Activated CD4-positive, alpha-beta T cell treated with anti-CD3 and anti-CD28 coated beads, Interleukin-2, amount 10 ng/mL, durations not matched to agents 24 days and 14 days (primary cell): ENCODE measurements at regions of chr2 and their contacts with region 1.

Region 1: GRCh38 chr2:200811336-200812121 is at the start of gene BZW1:
- DNase-seq: peak; percentile 99
- H3K4me3 Mint-ChIP-seq: peak within 1 kb of the TSS; percentile 100
- H3K27ac Mint-ChIP-seq: peak within 1 kb of the TSS; percentile 99
- H3K4me1 Mint-ChIP-seq: peaks cover 43% of the 10 kb centered on the region
- H3K27me3 Mint-ChIP-seq: peaks cover 2% of the 10 kb centered on the region
- total RNA-seq, gene BZW1: 489 and 490 TPM in 2 replicates

Region 2: DNA sequence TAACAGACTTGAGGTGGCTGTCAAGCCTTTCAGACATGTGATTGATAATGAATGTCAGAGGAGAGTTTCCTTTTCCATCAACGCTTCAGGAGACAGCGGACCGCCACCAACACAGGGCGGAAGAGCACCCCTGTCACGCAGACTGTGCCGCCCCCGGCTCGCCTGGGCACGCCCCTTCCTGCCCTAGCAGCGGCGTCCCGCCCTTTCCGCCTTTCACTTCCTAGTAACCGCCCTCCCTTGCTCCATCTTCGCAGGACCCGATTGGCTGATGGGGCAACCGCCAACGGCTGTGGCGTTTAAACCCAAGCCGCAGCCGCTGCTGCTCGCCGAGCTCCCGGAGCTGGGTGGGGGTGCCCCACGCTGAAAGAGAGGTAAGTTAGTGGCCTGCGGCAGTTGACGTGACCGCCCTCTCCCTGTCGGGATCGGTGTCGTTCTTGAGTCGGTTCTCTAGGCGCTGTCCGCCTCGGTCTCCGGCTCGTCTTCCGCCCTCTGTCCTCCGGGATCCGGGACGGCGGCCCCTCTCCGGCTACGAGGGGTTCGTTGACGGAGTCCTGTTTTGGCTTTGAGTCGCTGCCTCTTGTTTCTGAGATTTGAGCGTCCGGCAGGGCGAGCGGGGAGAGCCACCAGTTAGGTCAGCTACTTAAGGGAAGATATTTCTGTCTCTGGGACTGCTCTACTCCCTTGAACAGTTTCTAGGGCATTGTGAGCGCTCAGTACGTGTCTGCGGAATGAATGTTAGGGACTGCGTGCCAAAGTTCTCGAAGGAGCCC is 285.5 kb before region 1 on chr2 and contains the start of gene SGO2:
- intact Hi-C with region 1: loop called (anchors 2 kb)
- DNase-seq: peak; percentile 99
- H3K4me3 Mint-ChIP-seq: peak within 1 kb of the TSS; percentile 94
- H3K27ac Mint-ChIP-seq: peak within 1 kb of the TSS; percentile 92
- H3K4me1 Mint-ChIP-seq: peaks cover 36% of the 10 kb centered on the region
- H3K27me3 Mint-ChIP-seq: no peaks in the 10 kb centered on the region
- total RNA-seq, gene SGO2: 25.7 and 27.2 TPM in 2 replicates

Region 3: GRCh38 chr2:200713003-200713703 is 98.4 kb before region 1 on chr2:
- intact Hi-C with region 1: loop called (anchors 1 kb)
- DNase-seq: peak; percentile 97
- H3K4me3 Mint-ChIP-seq: peak overlapping the region; percentile 74
- H3K27ac Mint-ChIP-seq: peak overlapping the region; percentile 99
- H3K4me1 Mint-ChIP-seq: peaks cover 29% of the 10 kb centered on the region
- H3K27me3 Mint-ChIP-seq: no peaks in the 10 kb centered on the region

Region 4: DNA sequence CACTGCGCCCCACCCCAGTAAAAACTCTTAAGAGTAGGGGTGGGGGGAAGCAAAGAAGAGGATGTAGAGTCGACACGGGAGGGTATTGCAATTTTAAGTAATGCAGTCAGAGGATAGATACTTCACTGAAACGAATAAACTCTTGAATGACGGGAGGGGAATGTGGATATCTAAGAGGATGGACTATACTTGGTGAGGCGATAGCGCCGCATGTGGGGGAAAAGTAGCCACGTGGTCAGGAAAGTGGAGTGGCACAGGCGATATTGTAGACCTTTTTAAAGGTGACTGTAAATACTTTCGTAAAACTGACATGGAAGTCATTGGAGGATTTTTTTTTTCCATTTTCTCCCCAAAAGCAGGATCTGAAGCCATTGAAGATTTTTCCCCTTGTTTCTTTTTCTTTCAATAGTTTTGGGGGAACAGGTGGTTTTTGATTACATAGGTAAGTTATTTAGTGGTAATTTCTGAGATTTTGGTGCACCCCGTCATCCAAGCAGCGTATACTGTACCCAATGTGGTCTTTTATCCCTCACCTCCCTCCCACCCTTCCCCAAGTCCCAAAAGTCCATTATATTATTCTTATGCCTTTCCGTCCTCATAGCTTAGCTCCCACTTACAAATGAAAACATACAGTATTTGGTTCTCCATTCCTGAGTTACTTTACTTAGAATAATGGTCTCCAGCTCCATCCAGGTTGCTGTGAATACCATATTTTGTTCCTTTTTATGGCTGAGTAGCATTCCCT is 39.2 kb after region 1 on chr2:
- intact Hi-C with region 1: no loop called
- DNase-seq: no peak
- H3K4me3 Mint-ChIP-seq: no peak overlapping the region
- H3K27ac Mint-ChIP-seq: no peak overlapping the region
- H3K4me1 Mint-ChIP-seq: peaks cover 4% of the 10 kb centered on the region
- H3K27me3 Mint-ChIP-seq: no peaks in the 10 kb centered on the region

Region 5: DNA sequence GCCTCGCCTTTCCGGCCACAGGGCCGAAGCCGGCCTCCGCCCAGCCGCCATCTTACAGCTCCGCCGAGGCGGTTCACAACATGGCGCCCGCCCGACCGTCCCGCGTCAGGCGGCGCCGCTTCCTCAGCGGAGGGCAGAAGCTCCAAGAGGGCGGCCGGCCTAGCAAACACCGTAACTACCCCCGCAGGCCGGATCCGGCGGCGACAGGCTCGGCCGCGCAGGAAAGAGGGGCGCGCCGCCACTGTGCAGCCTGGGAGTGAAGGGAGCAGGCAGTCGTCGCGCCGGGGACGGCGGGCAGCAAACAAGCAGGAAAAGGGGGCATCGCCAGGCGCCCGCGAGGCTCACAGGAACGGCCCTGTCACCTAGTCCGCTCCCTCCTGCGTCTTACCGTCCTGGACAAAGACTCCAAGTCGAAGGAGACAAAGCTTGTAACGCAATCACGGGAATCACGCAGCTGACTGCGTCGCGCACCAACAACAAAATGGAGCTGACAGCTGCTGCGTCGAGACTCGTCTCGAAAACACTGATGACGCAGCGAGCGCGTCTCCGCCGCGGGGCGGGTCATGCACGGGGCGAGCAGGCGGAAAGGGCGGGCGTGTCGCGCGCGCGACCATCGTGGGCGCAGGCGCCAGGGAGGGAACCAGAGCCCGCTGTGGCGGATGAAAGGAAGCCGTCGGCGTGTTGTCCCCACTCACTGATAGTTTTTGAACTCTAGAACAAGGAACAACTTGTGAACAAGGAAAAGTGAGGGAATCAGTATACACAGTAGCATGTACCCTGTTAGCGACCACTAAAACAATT is 52.8 kb after region 1 on chr2 and contains the start of gene CLK1:
- intact Hi-C with region 1: loop called (anchors 1 kb)
- DNase-seq: peak; percentile 99
- H3K4me3 Mint-ChIP-seq: peak within 1 kb of the TSS; percentile 91
- H3K27ac Mint-ChIP-seq: peak within 1 kb of the TSS; percentile 94
- H3K4me1 Mint-ChIP-seq: peaks cover 32% of the 10 kb centered on the region
- H3K27me3 Mint-ChIP-seq: no peaks in the 10 kb centered on the region
- total RNA-seq, gene CLK1: 99.3 and 100 TPM in 2 replicates

Region 6: DNA sequence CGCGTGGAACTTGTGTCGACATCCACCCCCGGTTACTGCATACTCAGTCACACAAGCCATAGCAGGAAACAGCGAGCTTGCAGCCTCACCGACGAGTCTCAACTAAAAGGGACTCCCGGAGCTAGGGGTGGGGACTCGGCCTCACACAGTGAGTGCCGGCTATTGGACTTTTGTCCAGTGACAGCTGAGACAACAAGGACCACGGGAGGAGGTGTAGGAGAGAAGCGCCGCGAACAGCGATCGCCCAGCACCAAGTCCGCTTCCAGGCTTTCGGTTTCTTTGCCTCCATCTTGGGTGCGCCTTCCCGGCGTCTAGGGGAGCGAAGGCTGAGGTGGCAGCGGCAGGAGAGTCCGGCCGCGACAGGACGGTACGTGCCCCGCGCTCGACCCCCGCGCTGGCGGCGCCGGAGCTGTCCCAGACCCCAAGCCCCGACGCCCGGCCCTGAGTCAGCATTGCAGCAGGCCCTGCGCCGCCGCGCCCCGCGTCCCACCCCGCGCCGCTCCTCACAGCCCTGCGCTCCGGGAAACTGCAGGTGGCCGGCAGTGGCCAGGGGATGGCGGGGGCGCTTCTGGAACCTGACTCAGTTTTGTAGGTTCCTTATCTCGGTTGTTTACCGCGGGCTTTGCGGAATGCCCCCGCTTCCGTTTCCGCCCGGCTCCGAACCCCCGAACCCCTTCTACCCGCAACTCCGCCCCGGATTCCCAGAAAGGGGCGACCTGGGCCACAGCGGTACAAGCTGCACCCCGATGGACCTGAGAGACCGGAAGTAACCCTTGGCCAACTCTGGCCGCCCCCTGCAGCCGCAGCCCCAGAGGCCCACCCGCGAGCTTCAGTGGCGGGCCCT is 304.8 kb after region 1 on chr2 and contains the start of gene CFLAR:
- intact Hi-C with region 1: loop called (anchors 1 kb)
- DNase-seq: peak; percentile 96
- H3K4me3 Mint-ChIP-seq: peak within 1 kb of the TSS; percentile 96
- H3K27ac Mint-ChIP-seq: peak within 1 kb of the TSS; percentile 97
- H3K4me1 Mint-ChIP-seq: peaks cover 32% of the 10 kb centered on the region
- H3K27me3 Mint-ChIP-seq: no peaks in the 10 kb centered on the region
- total RNA-seq, gene CFLAR: 402 and 415 TPM in 2 replicates

Region 7: DNA sequence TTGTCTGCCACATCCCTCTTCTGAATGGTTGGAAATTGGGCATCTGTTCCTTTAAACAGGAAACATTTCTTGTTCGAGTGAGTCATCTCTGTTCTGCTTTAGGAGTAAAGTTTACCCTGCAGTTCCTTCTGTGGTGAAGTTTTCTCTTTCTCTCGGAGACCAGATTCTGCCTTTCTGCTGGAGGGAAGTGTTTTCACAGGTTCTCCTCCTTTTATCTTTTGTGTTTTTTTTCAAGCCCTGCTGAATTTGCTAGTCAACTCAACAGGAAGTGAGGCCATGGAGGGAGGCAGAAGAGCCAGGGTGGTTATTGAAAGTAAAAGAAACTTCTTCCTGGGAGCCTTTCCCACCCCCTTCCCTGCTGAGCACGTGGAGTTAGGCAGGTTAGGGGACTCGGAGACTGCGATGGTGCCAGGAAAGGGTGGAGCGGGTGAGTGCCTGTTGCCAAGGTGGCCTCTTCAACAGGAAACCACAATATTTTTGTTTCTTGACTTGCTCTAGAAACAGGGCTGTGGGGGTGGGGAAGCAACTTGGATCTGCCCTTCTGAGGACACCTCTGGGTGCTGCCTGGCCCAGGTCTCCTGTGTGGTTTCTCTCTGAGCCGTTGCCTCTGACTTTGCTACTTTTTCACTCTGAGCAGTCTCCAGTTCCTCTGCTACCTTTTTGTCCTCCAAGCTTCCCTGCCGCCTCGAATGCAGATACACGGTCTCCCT is 446.6 kb after region 1 on chr2:
- intact Hi-C with region 1: loop called (anchors 1 kb)
- DNase-seq: peak; percentile 98
- H3K4me3 Mint-ChIP-seq: peak overlapping the region; percentile 100
- H3K27ac Mint-ChIP-seq: peak overlapping the region; percentile 98
- H3K4me1 Mint-ChIP-seq: peaks cover 71% of the 10 kb centered on the region
- H3K27me3 Mint-ChIP-seq: no peaks in the 10 kb centered on the region

Region 8: GRCh38 chr2:202634556-202635427 is 1823.3 kb after region 1 on chr2 and contains the start of gene FAM117B:
- intact Hi-C with region 1: loop called (anchors 10 kb)
- DNase-seq: peak; percentile 99
- H3K4me3 Mint-ChIP-seq: peak within 1 kb of the TSS; percentile 98
- H3K27ac Mint-ChIP-seq: peak within 1 kb of the TSS; percentile 97
- H3K4me1 Mint-ChIP-seq: peaks cover 35% of the 10 kb centered on the region
- H3K27me3 Mint-ChIP-seq: no peaks in the 10 kb centered on the region
- total RNA-seq, gene FAM117B: 14.5 TPM in 2 replicates